ENCODE measurements at regions of chr14 and their contacts with region 1.

Region 1: GRCh38 chr14:57486767-57487379 is 6.8 kb downstream of the CCDC198 start:
- DNase-seq: no peak
- H3K4me3 ChIP-seq: no peak overlapping the region
- H3K27ac ChIP-seq: no peak overlapping the region
- H3K4me1 ChIP-seq: peaks cover 11% of the 10 kb centered on the region
- H3K27me3 ChIP-seq: peaks cover 8% of the 10 kb centered on the region
- CTCF ChIP-seq: peak; percentile 70

Region 2: DNA sequence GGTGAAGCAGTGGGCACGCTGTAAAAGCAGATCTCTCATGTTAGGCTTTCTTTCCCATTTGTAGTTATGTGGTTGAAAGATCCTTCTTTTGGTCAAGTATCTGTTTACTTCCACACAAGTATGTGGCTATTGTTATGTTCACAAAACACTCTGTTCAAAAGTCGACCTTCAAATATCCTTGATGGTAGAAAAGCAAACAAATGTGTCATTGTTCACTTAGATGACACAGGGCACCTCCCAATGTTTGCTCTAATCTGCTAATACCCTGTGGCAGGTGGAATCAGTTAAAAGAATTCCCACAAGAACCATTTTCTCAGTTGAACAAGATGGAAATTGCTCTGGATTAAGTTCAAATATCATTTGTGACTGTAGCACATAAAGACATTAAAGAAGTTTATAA is 140.1 kb before region 1 on chr14:
- intact Hi-C with region 1: no loop called
- DNase-seq: no peak
- H3K4me3 ChIP-seq: no peak overlapping the region
- H3K27ac ChIP-seq: no peak overlapping the region
- H3K4me1 ChIP-seq: no peaks in the 10 kb centered on the region
- H3K27me3 ChIP-seq: no peaks in the 10 kb centered on the region
- CTCF ChIP-seq: no peak

Region 3: GRCh38 chr14:58072288-58073071 is 585.6 kb after region 1 on chr14:
- intact Hi-C with region 1: loop called (anchors 5 kb)
- DNase-seq: no peak
- H3K4me3 ChIP-seq: peak overlapping the region; percentile 55
- H3K27ac ChIP-seq: no peak overlapping the region
- H3K4me1 ChIP-seq: peaks cover 2% of the 10 kb centered on the region
- H3K27me3 ChIP-seq: no peaks in the 10 kb centered on the region
- CTCF ChIP-seq: peak; percentile 81